ENCODE measurements at regions of chr17 and their contacts with region 1.

Region 1: DNA sequence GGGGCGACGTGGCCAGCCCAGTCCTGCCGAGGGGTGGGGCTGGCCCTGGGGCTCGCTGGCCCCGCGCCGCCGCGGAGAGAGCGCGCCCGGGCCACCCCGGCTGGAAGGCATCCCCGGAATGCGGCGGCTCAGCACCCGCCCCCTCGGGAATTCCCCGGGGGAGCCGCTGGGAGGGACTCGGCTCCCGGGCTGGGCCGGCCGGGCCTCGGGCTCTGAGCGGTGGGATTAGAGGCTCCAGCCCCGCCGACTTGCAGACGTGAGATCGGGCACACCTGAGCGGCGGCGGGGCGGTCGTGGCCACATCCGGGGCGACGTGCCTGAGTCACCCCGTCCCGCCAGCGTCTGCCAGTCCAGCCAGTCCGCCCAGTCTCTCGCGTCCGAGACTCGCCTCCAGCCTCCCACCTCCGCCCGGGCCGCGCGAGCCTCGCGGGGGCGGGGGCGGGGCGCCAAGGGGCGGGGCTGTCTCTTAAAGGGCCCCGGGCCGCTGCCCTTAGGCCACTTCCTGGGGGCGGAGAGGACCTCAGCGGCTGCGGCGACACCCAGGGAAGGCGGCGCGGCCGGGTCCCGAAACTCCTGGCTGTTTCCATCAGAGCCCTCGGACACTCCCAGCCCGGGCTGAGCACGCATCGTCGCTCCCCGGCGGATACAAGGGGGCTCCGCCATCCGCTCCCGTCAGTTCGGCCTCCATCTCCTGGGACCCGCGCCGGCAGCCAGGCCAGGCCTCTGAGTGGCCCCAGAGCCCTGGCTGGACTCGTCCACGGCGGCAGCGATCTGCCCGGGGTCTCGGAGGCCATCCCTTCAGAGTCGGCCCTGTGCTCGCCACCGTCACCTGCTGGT is at the start of gene KCTD11:
- DNase-seq: peak; percentile 89 to 94 (median 90)
- H3K4me3 ChIP-seq: peak within 1 kb of the TSS; percentile 64
- H3K27ac ChIP-seq: peak within 1 kb of the TSS; percentile 89 to 96
- H3K4me1 ChIP-seq: peaks cover 23% of the 10 kb centered on the region
- H3K27me3 ChIP-seq: no peaks in the 10 kb centered on the region
- CTCF ChIP-seq: peak in 1 of 3 donors; percentile 71
- EP300 ChIP-seq: no peak
- POLR2A ChIP-seq: peak; percentile 4
- total RNA-seq, gene KCTD11: 5.1 to 12.9 (median 10.5) TPM

Region 2: GRCh38 chr17:7280519-7281429 is 71.1 kb before region 1 on chr17:
- intact Hi-C with region 1: loop called in 1 of 4 experiments (anchors 5 kb)
- DNase-seq: peak; percentile 75 to 91 (median 85)
- H3K4me3 ChIP-seq: peak overlapping the region; percentile 23
- H3K27ac ChIP-seq: peak overlapping the region; percentile 44 to 62
- H3K4me1 ChIP-seq: peaks cover 6% of the 10 kb centered on the region
- H3K27me3 ChIP-seq: no peaks in the 10 kb centered on the region
- CTCF ChIP-seq: peak; percentile 80 to 96 (median 95)
- EP300 ChIP-seq: no peak
- POLR2A ChIP-seq: peak; percentile 25

Region 3: DNA sequence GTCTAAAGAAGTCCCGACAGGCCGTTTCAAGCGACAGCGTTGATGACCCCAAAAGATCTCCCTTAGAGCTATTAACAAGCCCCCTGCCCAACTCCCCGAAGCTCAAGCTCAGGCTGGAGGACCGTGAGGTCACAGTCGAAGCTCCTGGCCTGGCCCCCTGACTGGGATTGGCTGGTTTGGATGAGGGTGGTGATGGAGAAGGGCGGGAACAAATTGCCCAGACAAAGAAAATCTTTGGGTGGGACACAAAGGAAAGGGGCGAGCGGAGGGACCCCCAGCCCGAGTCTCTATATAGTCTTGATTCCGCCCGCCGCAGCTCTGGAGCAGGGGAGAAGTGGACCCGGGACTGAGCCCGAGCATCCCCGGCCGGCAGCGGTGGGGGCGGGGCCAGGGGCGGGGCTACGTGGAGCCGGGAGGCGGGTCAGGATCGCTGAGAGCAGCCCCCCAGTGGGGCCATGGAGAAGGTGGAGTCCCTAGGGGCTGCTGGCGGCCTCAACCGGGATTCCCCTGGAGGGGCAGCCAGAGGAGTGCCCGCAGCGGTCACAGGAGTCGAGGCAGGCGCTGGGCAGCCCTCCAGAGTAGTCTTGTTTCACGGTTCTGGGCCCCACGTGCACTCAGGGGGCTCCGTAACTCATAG is 21.8 kb before region 1 on chr17:
- intact Hi-C with region 1: loop called in 1 of 4 experiments (anchors 2 kb)
- DNase-seq: peak; percentile 77 to 86 (median 81)
- H3K4me3 ChIP-seq: peak overlapping the region; percentile 95
- H3K27ac ChIP-seq: peak overlapping the region; percentile 81 to 86
- H3K4me1 ChIP-seq: peaks cover 5% of the 10 kb centered on the region
- H3K27me3 ChIP-seq: no peaks in the 10 kb centered on the region
- CTCF ChIP-seq: no peak
- EP300 ChIP-seq: no peak
- POLR2A ChIP-seq: no peak

Region 4: DNA sequence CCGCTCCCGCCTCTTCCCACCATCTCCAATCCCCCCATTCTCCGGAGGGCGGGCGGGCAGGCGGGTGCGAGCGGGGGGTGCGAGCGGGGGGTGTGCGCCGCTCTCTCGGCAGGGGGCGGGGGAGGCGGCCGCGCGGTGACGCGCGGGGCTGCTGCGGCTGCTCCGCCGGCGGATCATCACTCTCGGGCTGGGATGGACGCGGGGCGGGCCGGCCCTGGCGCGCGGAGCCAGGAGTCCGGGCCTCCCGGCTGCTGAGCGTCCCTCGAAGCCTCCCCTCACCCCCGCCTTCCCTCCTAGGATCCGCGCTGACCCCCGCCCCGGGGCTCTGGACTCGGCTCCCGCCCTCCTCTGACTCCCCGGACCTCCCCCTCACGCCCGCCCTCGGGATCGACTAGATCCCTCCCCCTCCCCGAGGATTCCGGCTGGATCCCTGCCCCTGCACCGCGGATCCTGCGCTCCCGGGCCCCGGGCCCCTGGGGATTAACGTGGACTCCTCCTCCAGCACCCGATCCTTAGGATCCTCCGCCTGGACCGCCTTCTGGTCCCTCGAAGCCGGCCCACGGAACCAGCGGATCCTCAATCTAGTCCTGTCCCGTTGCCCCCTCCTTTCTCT is 53.0 kb after region 1 on chr17:
- intact Hi-C with region 1: loop called in 1 of 4 experiments (anchors 5 kb)
- DNase-seq: peak in 2 of 5 donors; percentile 80 to 86
- H3K4me3 ChIP-seq: peak overlapping the region; percentile 65
- H3K27ac ChIP-seq: peak overlapping the region; percentile 89 to 95
- H3K4me1 ChIP-seq: peaks cover 5% of the 10 kb centered on the region
- H3K27me3 ChIP-seq: no peaks in the 10 kb centered on the region
- CTCF ChIP-seq: peak in 2 of 3 donors; percentile 20 to 27
- EP300 ChIP-seq: no peak
- POLR2A ChIP-seq: peak; percentile 70

Region 5: GRCh38 chr17:7435221-7435675 is 83.4 kb after region 1 on chr17 and contains the start of gene TMEM102:
- intact Hi-C with region 1: loop called in 3 of 4 experiments (anchors 2 to 10 kb)
- DNase-seq: peak; percentile 78 to 88 (median 84)
- H3K4me3 ChIP-seq: peak within 1 kb of the TSS; percentile 27
- H3K27ac ChIP-seq: no peak within 1 kb of the TSS
- H3K4me1 ChIP-seq: peaks cover 4% of the 10 kb centered on the region
- H3K27me3 ChIP-seq: no peaks in the 10 kb centered on the region
- CTCF ChIP-seq: no peak
- EP300 ChIP-seq: no peak
- POLR2A ChIP-seq: no peak
- total RNA-seq, gene TMEM102: 0.43 to 8.3 (median 1.5) TPM

Region 6: GRCh38 chr17:7484067-7484918 is 132.4 kb after region 1 on chr17 and contains the start of gene POLR2A:
- intact Hi-C with region 1: loop called in 1 of 4 experiments (anchors 2 kb)
- DNase-seq: peak; percentile 99
- H3K4me3 ChIP-seq: peak within 1 kb of the TSS; percentile 67
- H3K27ac ChIP-seq: peak within 1 kb of the TSS; percentile 90 to 98
- H3K4me1 ChIP-seq: peaks cover 12% of the 10 kb centered on the region
- H3K27me3 ChIP-seq: no peaks in the 10 kb centered on the region
- CTCF ChIP-seq: peak in 2 of 3 donors; percentile 27 to 43
- EP300 ChIP-seq: peak; percentile 73
- POLR2A ChIP-seq: peak; percentile 100
- total RNA-seq, gene POLR2A: 39.5 to 110 (median 88.2) TPM

Region 7: DNA sequence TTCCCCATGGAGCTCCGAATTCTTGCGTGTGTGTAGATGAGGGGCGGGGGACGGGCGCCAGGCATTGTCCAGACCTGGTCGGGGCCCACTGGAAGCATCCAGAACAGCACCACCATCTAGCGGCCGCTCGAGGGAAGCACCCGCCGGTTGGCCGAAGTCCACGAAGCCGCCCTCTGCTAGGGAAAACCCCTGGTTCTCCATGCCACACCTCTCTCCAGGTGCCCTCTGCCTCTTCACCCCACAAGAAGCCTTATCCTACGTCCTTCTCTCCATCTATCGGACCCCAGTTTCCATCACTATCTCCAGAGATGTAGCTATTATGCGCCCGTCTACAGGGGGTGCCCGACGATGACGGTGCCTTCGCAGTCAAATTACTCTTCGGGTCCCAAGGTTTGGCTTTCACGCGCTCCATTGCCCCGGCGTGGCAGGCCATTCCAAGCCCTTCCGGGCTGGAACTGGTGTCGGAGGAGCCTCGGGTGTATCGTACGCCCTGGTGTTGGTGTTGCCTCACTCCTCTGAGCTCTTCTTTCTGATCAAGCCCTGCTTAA is 209.2 kb after region 1 on chr17:
- intact Hi-C with region 1: loop called in 3 of 4 experiments (anchors 5 to 10 kb)
- DNase-seq: peak; percentile 88 to 95 (median 94)
- H3K4me3 ChIP-seq: peak overlapping the region; percentile 89
- H3K27ac ChIP-seq: peak overlapping the region; percentile 67 to 99
- H3K4me1 ChIP-seq: peaks cover 27% of the 10 kb centered on the region
- H3K27me3 ChIP-seq: no peaks in the 10 kb centered on the region
- CTCF ChIP-seq: peak; percentile 79 to 94 (median 89)
- EP300 ChIP-seq: no peak
- POLR2A ChIP-seq: no peak

Measured in ovary (tissue), 10 donors.